Mammary epithelial cell (primary cell): ENCODE measurements at regions of chr12 and their contacts with region 1.

Region 1: GRCh38 chr12:131345521-131346436 is 365.1 kb upstream of the SFSWAP start:
- DNase-seq: no peak
- H3K4me3 ChIP-seq: no peak overlapping the region
- H3K27ac ChIP-seq: no peak overlapping the region
- H3K4me1 ChIP-seq: no peaks in the 10 kb centered on the region
- H3K27me3 ChIP-seq: no peaks in the 10 kb centered on the region
- CTCF ChIP-seq: no peak

Region 2: DNA sequence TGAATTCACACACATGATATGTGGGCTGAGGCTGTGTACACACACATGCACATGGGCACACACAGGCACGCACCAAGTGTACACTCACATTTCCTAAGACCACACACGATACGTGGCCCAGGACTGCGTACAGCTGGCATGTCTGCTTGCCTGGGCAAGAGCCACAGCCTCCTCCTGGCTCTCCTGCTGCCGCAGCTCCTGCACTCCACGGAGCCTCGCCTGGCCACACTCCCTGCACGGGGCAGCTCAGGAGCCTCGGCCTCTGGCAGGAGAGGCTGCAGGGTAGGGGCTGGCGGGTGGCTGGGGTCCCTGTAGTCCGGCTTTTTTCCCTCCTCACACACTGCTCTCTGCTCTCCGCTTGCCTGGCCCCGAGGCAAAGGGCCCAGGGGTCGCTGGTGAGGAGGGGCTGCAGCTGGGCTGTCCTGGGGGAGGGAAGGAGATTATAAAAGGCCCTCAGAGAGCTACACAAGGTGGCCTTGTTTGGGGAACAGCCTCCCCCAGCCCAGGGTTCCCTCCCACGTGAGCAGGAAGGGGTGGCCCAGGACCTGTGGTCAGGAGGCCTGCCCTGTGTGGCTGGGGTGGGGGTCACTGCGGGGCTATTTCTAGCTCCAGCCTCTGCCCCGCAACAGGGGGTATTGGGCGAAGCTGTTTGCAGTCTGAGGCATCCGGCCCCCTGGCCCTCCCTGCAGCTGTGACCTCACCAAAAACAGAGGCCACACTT is 276.1 kb after region 1 on chr12:
- CTCF ChIA-PET with region 1: no interaction called
- dilution Hi-C with region 1: no loop called
- in situ Hi-C with region 1: loop called in 1 of 2 experiments (anchors 5 kb)
- intact Hi-C with region 1: no loop called
- DNase-seq: no peak
- H3K4me3 ChIP-seq: no peak overlapping the region
- H3K27ac ChIP-seq: no peak overlapping the region
- H3K4me1 ChIP-seq: no peaks in the 10 kb centered on the region
- H3K27me3 ChIP-seq: no peaks in the 10 kb centered on the region
- CTCF ChIP-seq: no peak